HAP-1 (cell line): ENCODE measurements at regions of chr11 and their contacts with region 1.

Region 1: DNA sequence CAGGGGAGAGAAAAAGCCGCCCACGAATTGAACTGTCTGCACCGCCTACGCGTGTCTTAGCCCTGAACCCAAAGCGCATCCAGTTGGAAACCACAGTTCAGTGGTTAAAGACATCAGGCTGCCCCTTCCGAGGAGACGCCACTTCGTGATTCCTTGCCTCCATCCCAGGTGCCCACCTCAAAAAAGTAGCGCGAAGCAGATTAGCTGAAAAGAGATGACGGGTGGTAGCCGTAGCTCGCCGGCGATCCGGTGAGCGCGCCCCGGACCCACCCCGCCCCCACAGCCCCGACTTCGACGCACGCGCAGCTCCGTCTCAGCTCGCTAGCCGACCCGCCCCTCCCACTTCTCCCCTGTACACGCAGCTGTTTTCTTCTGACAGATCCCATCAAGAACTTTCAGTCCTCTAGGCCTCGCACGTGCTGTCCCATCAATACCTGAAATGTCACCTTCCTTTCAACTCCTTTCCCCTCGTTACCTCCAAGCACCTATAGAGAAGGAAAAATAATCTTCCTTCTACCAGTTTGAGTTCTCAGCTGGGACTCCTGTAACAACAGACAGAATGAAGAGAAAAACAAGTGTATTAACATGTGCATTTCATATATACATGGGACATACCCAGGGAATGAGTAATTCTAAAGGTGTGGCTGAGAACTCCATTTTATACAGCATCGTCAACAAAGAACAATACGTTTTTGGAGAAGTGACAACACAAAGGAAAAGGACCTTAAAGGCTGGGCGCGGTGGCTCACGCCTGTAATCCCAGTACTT is 49.5 kb downstream of the OR4D9 start:
- DNase-seq: peak; percentile 82 to 94
- H3K4me3 ChIP-seq: peak overlapping the region; percentile 74
- H3K4me1 ChIP-seq: peaks cover 18% of the 10 kb centered on the region
- H3K27me3 ChIP-seq: no peaks in the 10 kb centered on the region

Region 2: DNA sequence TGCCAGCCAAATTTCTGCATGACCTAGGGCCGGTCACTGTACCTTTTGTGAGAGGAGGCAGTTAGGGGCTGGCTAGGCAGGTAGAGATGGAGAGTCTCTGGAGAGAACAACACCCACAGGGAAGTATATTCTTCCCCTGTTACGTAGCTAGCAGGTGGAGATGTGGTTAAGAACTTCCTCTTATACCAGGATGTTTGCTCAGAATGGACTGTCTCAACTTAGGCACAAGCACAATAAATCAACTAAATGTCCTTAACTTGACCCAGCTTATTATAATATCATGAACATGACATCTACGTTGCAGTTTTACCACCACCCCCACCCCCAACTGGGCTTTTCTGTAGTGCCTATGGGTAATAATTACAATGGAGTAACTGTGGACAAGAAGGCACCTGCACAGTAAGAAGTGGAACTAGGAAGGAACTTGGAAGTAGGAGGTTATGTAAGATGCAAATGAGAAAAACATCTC is 287.5 kb before region 1 on chr11:
- in situ Hi-C with region 1: no loop called
- DNase-seq: no peak
- H3K4me3 ChIP-seq: no peak overlapping the region
- H3K4me1 ChIP-seq: no peaks in the 10 kb centered on the region
- H3K27me3 ChIP-seq: no peaks in the 10 kb centered on the region

Region 3: GRCh38 chr11:59668950-59669610 is 108.2 kb after region 1 on chr11 and contains the start of gene PATL1:
- in situ Hi-C with region 1: loop called (anchors 10 kb)
- DNase-seq: peak; percentile 97 to 99
- H3K4me3 ChIP-seq: peak within 1 kb of the TSS; percentile 81
- H3K4me1 ChIP-seq: peaks cover 7% of the 10 kb centered on the region
- H3K27me3 ChIP-seq: no peaks in the 10 kb centered on the region